Posterior vena cava (tissue), 2 donors: ENCODE measurements at regions of chr2 and their contacts with region 1.

Region 1: DNA sequence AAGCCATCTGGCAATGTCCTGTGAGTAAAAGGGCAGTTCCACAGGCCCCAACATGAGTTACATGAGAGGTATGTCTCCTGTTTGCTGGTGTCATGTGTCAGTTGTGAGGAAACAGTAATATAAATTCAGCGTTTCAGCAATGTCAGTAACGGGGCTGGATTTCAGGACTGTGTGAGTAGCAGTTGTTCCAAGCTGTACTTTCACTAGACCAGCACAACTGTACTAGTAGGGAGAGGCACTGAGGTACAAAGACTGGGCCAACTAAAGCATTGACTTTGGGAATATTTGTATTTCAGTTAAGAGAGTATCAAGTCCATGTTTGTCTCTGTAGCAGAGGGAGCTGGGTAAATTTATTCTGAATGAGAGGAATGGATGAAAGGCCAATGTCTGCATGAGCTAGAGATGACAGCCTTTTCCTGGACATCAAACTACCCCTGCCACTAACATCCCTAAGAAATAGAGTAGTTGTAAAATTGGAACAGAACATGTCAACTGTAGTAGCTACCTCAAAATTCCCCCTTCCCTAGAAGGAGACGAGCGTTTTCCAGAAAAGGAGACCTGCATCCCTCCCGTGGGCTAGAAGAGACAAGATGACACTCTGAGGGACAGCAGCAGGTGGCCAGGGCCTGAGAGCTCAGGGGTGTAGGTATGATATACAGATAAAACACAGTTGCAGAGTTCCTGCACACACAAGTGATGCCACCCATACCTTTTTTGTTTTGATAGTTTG is 24.4 kb downstream of the EIF4E2 start:
- DNase-seq: no peak

Region 2: DNA sequence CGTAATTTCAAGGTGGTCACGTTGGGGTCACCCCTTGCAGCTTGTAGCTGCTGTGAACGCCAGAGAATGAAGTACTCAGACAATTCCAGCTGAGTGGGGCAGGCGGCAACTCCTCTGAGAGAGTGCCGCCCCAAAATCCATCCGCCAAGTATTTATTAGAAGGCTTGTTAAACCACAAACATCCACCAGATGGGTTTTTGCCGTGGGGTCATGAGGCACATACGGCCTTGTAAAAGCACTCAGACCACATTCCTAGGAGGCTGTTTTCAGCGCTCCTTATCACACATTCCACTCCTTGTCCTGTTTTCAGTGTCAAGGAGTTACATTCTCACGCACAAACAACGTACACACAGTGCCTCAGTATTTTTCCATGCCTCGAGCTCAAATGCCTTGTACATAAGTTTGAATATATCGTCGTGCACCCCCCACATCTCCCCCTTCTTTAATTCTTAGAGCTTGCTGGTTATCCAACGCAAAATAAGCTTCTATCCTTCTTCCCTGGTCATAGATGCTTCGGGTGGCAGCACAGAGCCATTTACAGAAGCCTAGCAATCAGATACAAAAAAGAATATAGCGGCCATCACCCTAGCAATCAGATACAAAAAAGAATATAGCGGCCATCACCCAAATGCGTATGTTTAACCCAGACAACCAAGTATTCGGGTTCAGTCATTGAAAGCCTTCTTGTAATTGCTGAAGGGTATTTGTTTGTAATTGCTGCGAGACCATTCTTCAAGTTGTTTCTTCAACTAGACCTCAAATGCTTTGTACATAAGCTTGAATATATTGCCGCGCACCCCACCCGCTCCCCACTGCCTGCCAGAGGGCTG is 189.0 kb before region 1 on chr2:
- intact Hi-C with region 1: no loop called
- DNase-seq: no peak

Region 3: DNA sequence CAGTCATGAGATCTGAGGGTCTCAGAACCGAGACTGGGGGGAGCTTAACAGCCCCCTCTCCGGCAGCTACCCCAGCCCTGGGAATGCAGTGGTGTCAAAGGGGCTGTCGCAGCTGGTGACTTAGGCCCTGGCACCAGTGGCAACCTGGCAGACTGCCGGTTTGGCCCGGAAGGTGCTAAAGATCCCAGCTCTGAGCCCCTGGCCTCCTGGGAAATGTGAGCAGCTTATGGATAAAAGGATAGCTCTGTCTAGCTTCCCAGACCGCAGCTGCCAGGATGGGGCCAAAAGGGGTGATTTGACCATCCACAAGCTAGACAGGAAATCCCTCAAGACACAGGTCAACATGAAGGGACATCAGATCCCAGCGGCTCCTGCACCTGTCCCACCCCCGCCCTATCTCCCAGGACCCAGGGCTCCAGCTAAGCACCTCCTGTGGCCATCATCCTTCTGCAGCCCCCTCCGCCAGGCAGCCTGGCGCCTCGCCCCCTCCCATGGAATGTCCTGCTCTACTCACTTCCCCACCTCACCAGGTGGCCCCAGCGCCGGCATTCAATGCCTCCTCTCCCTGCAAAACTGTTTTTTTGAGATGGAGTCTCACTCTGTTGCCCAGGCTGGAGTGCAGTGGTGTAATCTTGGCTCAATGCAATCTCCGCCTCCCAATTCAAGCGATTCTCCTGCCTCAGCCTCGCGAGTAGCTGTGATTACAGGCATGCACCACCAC is 25.4 kb after region 1 on chr2:
- intact Hi-C with region 1: loop called in 1 of 2 experiments (anchors 1 kb)
- DNase-seq: no peak